AG04449 (cell line): ENCODE measurements at regions of chr1 and their contacts with region 1.

Region 1: GRCh38 chr1:45359882-45360513 is 19.8 kb upstream of the MUTYH start:
- DNase-seq: no peak
- H3K4me3 ChIP-seq: no peak overlapping the region
- CTCF ChIP-seq: peak; percentile 49

Region 2: DNA sequence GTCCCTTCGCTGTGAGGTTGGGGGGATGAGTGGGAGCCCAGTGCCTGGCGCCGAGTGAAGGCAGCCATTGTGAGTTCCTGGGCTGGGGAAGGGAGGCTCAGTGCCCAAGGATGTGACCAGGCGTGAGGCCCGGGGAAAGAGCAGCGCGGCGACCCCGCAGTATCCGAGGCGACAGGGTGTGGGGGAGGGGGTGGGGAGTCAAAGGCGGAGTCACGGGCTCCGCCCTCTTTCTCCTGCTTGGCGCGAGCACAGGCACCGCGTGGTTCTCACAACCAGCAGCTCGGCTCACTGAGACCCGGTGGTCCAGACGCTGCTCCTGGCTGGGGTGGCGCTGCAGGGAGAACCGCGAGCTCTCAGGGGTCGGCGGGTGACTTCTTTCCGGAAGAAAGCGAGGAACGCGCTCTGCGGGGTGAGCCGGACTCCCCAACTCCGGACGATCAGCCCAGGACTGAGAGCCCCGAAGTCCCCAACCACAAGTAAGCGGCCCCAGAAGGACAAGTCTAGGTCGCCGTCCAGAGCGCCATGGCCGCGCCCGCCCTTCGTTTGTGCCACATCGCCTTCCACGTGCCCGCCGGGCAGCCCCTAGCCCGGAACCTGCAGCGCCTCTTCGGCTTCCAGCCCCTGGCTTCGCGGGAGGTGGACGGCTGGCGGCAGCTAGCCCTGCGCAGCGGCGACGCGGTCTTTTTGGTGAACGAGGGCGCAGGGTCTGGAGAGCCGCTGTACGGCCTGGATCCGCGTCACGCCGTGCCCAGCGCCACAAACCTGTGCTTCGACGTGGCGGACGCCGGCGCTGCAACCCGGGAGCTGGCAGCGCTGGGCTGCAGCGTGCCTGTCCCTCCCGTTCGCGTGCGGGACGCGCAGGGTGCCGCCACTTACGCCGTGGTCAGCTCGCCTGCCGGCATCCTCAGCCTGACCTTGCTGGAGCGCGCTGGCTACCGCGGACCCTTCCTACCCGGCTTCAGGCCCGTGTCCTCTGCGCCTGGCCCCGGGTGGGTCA is 33.1 kb before region 1 on chr1 and contains the start of gene HPDL:
- CTCF ChIA-PET with region 1: no interaction called
- POLR2A ChIA-PET with region 1: no interaction called
- DNase-seq: no peak
- H3K4me3 ChIP-seq: peak within 1 kb of the TSS; percentile 61
- CTCF ChIP-seq: no peak

Region 3: GRCh38 chr1:45339789-45340570 is 20.0 kb before region 1 on chr1 and contains the starts of genes MUTYH and TOE1:
- CTCF ChIA-PET with region 1: interaction called, 12 read pairs
- POLR2A ChIA-PET with region 1: interaction called, 3 read pairs
- DNase-seq: peak; percentile 36
- H3K4me3 ChIP-seq: peak within 1 kb of the TSS; percentile 97
- CTCF ChIP-seq: no peak

Region 4: DNA sequence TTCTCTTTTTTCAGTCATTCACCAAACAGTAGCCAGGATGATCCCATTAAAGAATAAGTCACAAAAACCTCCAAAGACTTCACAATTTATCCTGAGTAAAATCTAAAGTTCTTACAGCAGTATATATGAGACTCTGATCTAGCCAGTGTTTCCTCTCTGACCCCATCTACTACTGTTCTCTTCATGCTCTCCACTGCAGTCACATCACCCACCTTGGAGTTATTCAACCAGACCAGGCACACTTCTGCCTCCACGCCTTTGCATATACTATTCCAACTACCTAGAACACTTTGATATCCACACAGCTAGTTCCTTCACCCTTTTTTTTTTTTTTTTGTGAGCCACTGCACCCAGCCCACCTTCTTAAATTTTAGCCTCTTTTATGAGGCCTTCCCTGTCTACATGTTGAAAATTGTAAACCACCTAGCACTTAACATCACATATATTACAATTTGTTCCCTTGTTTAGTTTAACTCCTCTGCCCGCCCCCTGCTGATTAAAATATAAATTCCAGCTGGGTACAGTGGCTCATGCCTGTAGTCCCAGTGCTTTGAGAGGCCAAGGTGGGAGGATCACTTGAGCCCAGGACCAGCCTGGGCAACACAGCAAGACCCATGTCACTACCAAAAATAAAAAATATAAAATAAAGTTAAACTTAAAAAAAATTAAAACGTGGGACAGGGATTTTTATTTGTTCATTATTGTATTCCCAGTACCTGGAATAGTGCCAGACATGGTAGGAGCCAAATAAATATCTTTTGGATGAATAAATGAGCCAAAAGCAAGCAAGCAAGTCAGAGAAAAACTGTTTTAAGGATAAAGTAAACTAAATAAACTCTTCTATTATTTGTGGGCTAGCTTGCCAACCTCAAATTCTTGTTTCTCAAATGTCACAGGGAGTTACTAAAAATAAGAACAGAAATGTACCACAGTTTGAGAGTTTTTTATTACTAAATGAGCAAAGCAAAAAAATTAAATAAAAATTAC is 15.4 kb after region 1 on chr1:
- CTCF ChIA-PET with region 1: interaction called, 36 read pairs
- POLR2A ChIA-PET with region 1: no interaction called
- DNase-seq: no peak
- H3K4me3 ChIP-seq: no peak overlapping the region
- CTCF ChIP-seq: no peak

Region 5: DNA sequence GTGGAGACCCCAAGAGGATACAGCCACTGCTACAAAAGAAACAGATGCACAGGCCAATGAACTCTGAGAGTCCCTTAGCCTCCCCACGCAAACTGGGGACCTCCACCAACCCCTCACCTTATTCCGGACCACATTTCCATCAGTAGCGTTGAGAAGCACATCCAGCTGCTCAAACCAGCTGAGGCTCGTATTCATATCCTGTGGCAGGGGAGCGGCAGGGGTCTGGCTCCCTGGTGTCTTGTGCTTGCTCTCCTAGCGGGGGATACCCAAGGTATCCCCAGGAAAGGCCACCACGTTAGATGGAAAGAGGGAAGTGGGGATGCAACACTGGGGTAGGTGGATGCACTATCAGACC is 139.4 kb after region 1 on chr1:
- CTCF ChIA-PET with region 1: interaction called, 418 read pairs
- POLR2A ChIA-PET with region 1: no interaction called
- DNase-seq: no peak
- H3K4me3 ChIP-seq: peak overlapping the region; percentile 93
- CTCF ChIP-seq: no peak

Region 6: GRCh38 chr1:45569962-45570581 is 210.1 kb after region 1 on chr1:
- CTCF ChIA-PET with region 1: interaction called, 69 read pairs
- POLR2A ChIA-PET with region 1: no interaction called
- DNase-seq: peak; percentile 17
- H3K4me3 ChIP-seq: no peak overlapping the region
- CTCF ChIP-seq: peak; percentile 93